Activated T-helper 1 cell treated with anti-CD3 and anti-CD28 coated beads, Interleukin-12 subunit alpha, Interleukin-12 subunit beta, Interleukin-2, Interleukin-4 antibody, amounts not matched to agents 30 ng/mL and 10 ng/mL and 1 ng/mL, durations not matched to agents 14 hours and 24 hours and 36 hours (primary cell): ENCODE measurements at regions of chr6 and their contacts with region 1.

Region 1: GRCh38 chr6:42390228-42390934 is 61.3 kb downstream of the TRERF1 start:
- DNase-seq: peak; percentile 60
- H3K4me3 Mint-ChIP-seq: peak overlapping the region; percentile 78
- H3K27ac Mint-ChIP-seq: peak overlapping the region; percentile 99
- H3K4me1 Mint-ChIP-seq: peaks cover 92% of the 10 kb centered on the region
- H3K27me3 Mint-ChIP-seq: no peaks in the 10 kb centered on the region

Region 2: GRCh38 chr6:42158011-42158410 is 232.4 kb before region 1 on chr6:
- intact Hi-C with region 1: no loop called
- DNase-seq: no peak
- H3K4me3 Mint-ChIP-seq: no peak overlapping the region
- H3K27ac Mint-ChIP-seq: no peak overlapping the region
- H3K4me1 Mint-ChIP-seq: no peaks in the 10 kb centered on the region
- H3K27me3 Mint-ChIP-seq: peaks cover 9% of the 10 kb centered on the region

Region 3: DNA sequence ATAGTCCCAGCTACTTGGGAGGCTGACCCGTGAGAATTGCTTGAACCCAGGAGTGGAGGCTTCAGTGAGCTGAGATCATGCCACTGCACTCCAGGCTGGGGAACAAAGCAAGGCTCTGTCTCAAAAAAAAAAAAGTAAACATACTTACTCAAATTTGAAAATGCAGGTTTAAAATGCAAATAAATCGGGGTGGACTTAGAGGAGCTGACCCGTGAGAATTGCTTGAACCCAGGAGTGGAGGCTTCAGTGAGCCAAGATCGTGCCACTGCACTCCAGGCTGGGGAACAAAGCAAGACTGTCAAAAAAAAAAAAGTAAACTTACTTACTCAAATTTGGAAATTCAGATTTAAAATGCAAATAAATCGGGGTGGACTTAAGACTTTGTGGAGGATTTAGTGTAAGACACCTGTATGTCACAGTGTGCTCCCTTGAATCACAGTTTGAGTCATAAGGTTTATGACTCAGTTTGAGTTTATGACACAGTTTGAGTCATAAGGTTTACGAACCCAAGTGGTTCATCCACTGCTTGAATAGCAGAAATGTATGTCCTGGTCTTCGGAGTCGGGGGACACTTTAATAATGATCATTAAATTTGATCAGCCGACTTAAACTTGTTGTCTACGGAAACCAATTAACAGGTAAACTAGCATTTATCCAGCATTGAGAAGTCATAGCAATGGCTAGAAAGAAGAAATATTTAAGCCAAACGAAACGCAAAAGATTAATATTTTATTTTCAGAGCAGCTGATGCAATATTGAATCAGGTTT is 166.0 kb before region 1 on chr6:
- intact Hi-C with region 1: loop called (anchors 1 kb)
- DNase-seq: no peak
- H3K4me3 Mint-ChIP-seq: peak overlapping the region; percentile 61
- H3K27ac Mint-ChIP-seq: peak overlapping the region; percentile 85
- H3K4me1 Mint-ChIP-seq: peaks cover 18% of the 10 kb centered on the region
- H3K27me3 Mint-ChIP-seq: no peaks in the 10 kb centered on the region

Region 4: GRCh38 chr6:42338663-42339218 is 51.6 kb before region 1 on chr6:
- intact Hi-C with region 1: loop called (anchors 1 kb)
- DNase-seq: no peak
- H3K4me3 Mint-ChIP-seq: peak overlapping the region; percentile 49
- H3K27ac Mint-ChIP-seq: peak overlapping the region; percentile 89
- H3K4me1 Mint-ChIP-seq: peaks cover 84% of the 10 kb centered on the region
- H3K27me3 Mint-ChIP-seq: no peaks in the 10 kb centered on the region

Region 5: GRCh38 chr6:42367353-42368011 is 22.9 kb before region 1 on chr6:
- intact Hi-C with region 1: loop called (anchors 1 kb)
- DNase-seq: peak; percentile 42
- H3K4me3 Mint-ChIP-seq: peak overlapping the region; percentile 70
- H3K27ac Mint-ChIP-seq: peak overlapping the region; percentile 85
- H3K4me1 Mint-ChIP-seq: peaks cover 81% of the 10 kb centered on the region
- H3K27me3 Mint-ChIP-seq: no peaks in the 10 kb centered on the region

Region 6: DNA sequence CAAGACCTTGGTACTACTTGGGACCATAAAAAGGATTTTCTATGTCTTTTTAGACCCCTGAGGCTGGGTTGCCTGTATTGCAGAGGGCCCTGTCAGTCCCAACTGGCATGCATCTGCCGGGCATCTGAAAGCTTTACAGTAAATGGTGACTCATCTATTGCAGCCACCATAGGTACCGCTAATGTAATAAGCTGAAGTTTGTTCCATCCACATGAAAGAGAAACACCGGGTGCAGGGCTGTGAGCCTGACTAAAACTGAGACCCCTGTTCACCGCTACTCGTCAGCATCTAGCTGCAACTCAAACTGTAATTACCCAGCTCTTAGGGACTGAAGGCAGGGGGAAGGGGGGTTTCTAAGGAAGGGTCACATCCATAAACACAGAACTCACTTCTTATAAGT is 11.8 kb after region 1 on chr6:
- intact Hi-C with region 1: loop called (anchors 1 kb)
- DNase-seq: peak; percentile 66
- H3K4me3 Mint-ChIP-seq: peak overlapping the region; percentile 68
- H3K27ac Mint-ChIP-seq: peak overlapping the region; percentile 87
- H3K4me1 Mint-ChIP-seq: peaks cover 82% of the 10 kb centered on the region
- H3K27me3 Mint-ChIP-seq: no peaks in the 10 kb centered on the region

Region 7: DNA sequence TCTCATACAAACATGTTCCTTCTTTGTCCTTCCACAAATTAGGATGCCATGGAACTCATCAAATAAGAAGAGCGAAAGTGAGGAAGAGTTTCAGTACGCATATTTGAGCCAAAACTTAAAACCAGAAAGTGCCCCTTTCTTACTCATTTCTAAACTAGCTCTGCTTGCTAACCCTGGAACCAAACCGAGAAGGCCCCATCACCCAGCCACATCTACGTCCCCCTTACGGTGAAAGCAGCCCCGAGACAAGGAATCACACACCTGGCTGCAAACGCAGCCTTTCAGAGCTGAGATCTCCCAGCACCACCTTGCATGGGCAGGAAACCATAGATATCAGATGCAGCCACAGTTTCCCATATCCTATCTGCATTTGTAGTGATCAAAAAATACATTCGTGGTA is 32.9 kb after region 1 on chr6:
- intact Hi-C with region 1: loop called (anchors 1 kb)
- DNase-seq: peak; percentile 21
- H3K4me3 Mint-ChIP-seq: peak overlapping the region; percentile 27
- H3K27ac Mint-ChIP-seq: peak overlapping the region; percentile 6
- H3K4me1 Mint-ChIP-seq: peaks cover 79% of the 10 kb centered on the region
- H3K27me3 Mint-ChIP-seq: no peaks in the 10 kb centered on the region

Region 8: GRCh38 chr6:42520786-42521607 is 130.6 kb after region 1 on chr6:
- intact Hi-C with region 1: loop called (anchors 1 kb)
- DNase-seq: no peak
- H3K4me3 Mint-ChIP-seq: peak overlapping the region; percentile 9
- H3K27ac Mint-ChIP-seq: peak overlapping the region; percentile 89
- H3K4me1 Mint-ChIP-seq: peaks cover 16% of the 10 kb centered on the region
- H3K27me3 Mint-ChIP-seq: peaks cover 4% of the 10 kb centered on the region